ENCODE measurements at regions of chr4 and their contacts with region 1.

Region 1: DNA sequence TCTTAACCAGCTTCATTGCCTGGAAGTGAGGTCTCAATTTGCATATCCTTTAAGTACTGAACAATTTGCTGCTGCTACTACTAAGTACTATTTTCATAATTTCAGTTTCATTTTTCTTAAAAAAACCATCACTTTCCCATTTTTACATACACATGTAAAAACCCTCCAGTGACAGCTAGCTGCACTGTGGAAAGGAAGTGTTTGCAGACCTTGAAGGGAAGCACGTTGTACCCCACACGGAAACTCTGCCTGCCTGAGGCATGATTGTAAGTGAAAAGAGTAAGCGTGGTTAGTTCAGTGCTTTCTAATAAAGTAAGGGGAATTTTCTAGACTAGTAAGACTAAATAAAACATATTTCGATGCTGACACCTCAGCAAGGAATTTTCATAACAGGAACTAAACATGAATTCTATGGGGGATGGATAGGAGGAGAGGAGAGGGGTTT is 103.6 kb downstream of the RAPGEF2 start:
- DNase-seq: no peak
- ATAC-seq: no peak
- H3K4me3 ChIP-seq: no peak overlapping the region
- H3K27ac ChIP-seq: no peak overlapping the region
- H3K4me1 ChIP-seq: peaks cover 6% of the 10 kb centered on the region; the same call in 1 of the 3 replicates
- CTCF ChIP-seq: no peak
- EP300 ChIP-seq: no peak
- POLR2A ChIP-seq: no peak
- RAD21 ChIP-seq: no peak

Region 2: DNA sequence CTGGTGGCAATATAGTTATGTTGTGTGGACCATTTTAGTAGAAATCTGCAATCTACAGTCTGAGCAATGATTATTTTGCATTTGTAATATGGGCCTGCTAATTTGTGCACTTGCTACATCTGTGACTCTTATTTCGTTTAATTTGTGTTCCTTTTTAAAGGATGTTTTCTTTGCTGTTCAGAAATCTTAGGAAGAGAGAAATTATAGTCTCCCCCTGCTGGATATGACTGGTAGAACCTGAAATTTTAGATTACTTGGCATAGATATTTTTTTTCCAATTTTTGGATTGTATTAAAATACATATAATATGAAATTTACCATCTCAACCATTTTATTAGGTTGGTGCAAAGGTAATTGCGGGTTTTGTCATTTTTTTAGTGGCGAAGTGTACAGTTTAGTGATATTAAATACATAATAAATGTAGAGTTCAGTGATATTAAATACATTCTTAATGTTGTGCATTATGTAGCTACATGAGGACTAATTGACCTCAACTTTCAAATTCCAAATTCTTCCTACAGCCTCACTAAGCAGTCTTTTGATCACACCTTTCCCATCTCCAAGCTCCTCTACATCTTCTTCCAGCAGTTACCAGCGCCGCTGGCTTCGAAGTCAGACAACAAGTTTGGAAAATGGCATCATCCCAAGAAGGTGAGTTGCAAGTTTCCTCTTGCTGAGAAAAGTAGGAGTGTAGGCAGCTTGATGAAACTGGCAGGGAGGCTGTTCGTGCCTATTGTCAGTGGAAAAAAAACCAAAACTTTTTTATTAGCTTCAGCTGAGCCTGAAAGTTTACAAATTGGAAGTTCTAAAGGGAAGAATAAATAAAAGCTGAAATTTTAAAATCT is 355.4 kb before region 1 on chr4:
- CTCF ChIA-PET with region 1: interaction called, 36 read pairs
- POLR2A ChIA-PET with region 1: no interaction called
- DNase-seq: no peak
- ATAC-seq: no peak
- H3K4me3 ChIP-seq: no peak overlapping the region
- H3K27ac ChIP-seq: no peak overlapping the region
- H3K4me1 ChIP-seq: no peaks in the 10 kb centered on the region
- CTCF ChIP-seq: peak; percentile 50
- EP300 ChIP-seq: no peak
- POLR2A ChIP-seq: no peak
- RAD21 ChIP-seq: peak; percentile 46 to 54; a peak in 4 of 5 replicates

Region 3: GRCh38 chr4:158856852-158857251 is 349.6 kb before region 1 on chr4:
- CTCF ChIA-PET with region 1: interaction called, 36 read pairs
- POLR2A ChIA-PET with region 1: no interaction called
- DNase-seq: peak in 1 of 2 experiments; percentile 40
- ATAC-seq: peak; percentile 83 to 88; a peak in 5 of 6 replicates
- H3K4me3 ChIP-seq: no peak overlapping the region
- H3K27ac ChIP-seq: no peak overlapping the region
- H3K4me1 ChIP-seq: peaks cover 31% of the 10 kb centered on the region; the same call in 2 of the 3 replicates
- CTCF ChIP-seq: peak; percentile 63
- EP300 ChIP-seq: no peak
- POLR2A ChIP-seq: no peak
- RAD21 ChIP-seq: peak; percentile 77 to 84

Region 4: DNA sequence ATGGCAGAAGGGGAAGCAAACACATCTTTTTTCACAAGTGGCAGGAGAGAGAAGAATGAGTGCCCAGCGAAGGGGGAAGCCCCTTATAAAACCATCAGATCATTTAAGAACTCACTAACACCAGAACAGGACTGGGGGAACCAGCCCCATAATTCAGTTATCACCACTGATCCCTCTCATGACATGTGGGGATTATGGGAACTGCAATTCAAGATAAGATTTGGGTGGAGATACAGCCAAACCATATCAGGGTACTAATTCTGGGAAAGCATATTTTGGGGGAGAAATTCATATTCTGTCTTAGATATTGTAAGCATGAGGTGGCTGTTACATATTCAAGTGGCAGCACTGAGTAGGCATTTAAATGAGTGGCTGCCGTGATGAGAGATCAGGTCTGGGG is 15.8 kb before region 1 on chr4:
- CTCF ChIA-PET with region 1: interaction called, 12 read pairs
- POLR2A ChIA-PET with region 1: no interaction called
- DNase-seq: no peak
- ATAC-seq: no peak
- H3K4me3 ChIP-seq: no peak overlapping the region
- H3K27ac ChIP-seq: no peak overlapping the region
- H3K4me1 ChIP-seq: peaks cover 15% of the 10 kb centered on the region; the same call in 2 of the 3 replicates
- CTCF ChIP-seq: no peak
- EP300 ChIP-seq: no peak
- POLR2A ChIP-seq: no peak
- RAD21 ChIP-seq: no peak

Region 5: GRCh38 chr4:159308566-159309340 is 102.3 kb after region 1 on chr4:
- CTCF ChIA-PET with region 1: no interaction called
- POLR2A ChIA-PET with region 1: no interaction called
- DNase-seq: no peak
- ATAC-seq: no peak
- H3K4me3 ChIP-seq: no peak overlapping the region
- H3K27ac ChIP-seq: no peak overlapping the region
- H3K4me1 ChIP-seq: no peaks in the 10 kb centered on the region
- CTCF ChIP-seq: no peak
- EP300 ChIP-seq: no peak
- POLR2A ChIP-seq: no peak
- RAD21 ChIP-seq: no peak

Measured in A549 (cell line).